GM12878 (cell line): ENCODE measurements at regions of chr10 and their contacts with region 1.

Region 1: GRCh38 chr10:102713814-102714620 is at the start of gene ARL3:
- DNase-seq: peak; percentile 94
- ATAC-seq: peak; percentile 84
- H3K4me3 ChIP-seq: peak within 1 kb of the TSS; percentile 92
- H3K27ac ChIP-seq: peak within 1 kb of the TSS; percentile 88
- H3K4me1 ChIP-seq: peaks cover 17% of the 10 kb centered on the region
- H3K27me3 ChIP-seq: no peaks in the 10 kb centered on the region
- CTCF ChIP-seq: peak in 1 of 3 experiments; percentile 65; a peak in 2 of 6 replicates
- EP300 ChIP-seq: no peak
- POLR2A ChIP-seq: peak; percentile 74
- RAD21 ChIP-seq: peak; percentile 20; the same call in 1 of the 2 replicates
- polyA plus RNA-seq, gene ARL3: 21.0 to 26.1 TPM

Region 2: GRCh38 chr10:102503281-102504220 is 210.5 kb before region 1 on chr10 and contains the start of gene SUFU:
- CTCF ChIA-PET with region 1: interaction called, 4 read pairs
- POLR2A ChIA-PET with region 1: no interaction called
- RAD21 ChIA-PET with region 1: interaction called, 5 read pairs
- SMC1A ChIA-PET with region 1: interaction called, 8 read pairs
- in situ Hi-C with region 1: no loop called
- intact Hi-C with region 1: loop called (anchors 10 kb)
- DNase-seq: peak; percentile 93
- ATAC-seq: peak; percentile 82
- H3K4me3 ChIP-seq: peak within 1 kb of the TSS; percentile 88
- H3K27ac ChIP-seq: peak within 1 kb of the TSS; percentile 72; the same call in 1 of the 2 replicates
- H3K4me1 ChIP-seq: peaks cover 7% of the 10 kb centered on the region
- H3K27me3 ChIP-seq: no peaks in the 10 kb centered on the region
- CTCF ChIP-seq: peak; percentile 82 to 98 (median 89); a peak in 5 of 6 replicates
- EP300 ChIP-seq: no peak
- POLR2A ChIP-seq: peak; percentile 92
- RAD21 ChIP-seq: peak; percentile 88
- polyA plus RNA-seq, gene SUFU: 0.68 to 0.84 TPM

Region 3: GRCh38 chr10:102641880-102642735 is 71.9 kb before region 1 on chr10:
- CTCF ChIA-PET with region 1: interaction called, 19 read pairs
- POLR2A ChIA-PET with region 1: interaction called, 38 read pairs
- RAD21 ChIA-PET with region 1: interaction called, 59 read pairs
- SMC1A ChIA-PET with region 1: interaction called, 36 read pairs
- in situ Hi-C with region 1: no loop called
- intact Hi-C with region 1: loop called (anchors 2 kb)
- DNase-seq: peak; percentile 90
- ATAC-seq: peak; percentile 69
- H3K4me3 ChIP-seq: peak overlapping the region; percentile 93
- H3K27ac ChIP-seq: peak overlapping the region; percentile 96
- H3K4me1 ChIP-seq: peaks cover 7% of the 10 kb centered on the region
- H3K27me3 ChIP-seq: no peaks in the 10 kb centered on the region
- CTCF ChIP-seq: no peak
- EP300 ChIP-seq: no peak
- POLR2A ChIP-seq: peak; percentile 91
- RAD21 ChIP-seq: no peak

Region 4: DNA sequence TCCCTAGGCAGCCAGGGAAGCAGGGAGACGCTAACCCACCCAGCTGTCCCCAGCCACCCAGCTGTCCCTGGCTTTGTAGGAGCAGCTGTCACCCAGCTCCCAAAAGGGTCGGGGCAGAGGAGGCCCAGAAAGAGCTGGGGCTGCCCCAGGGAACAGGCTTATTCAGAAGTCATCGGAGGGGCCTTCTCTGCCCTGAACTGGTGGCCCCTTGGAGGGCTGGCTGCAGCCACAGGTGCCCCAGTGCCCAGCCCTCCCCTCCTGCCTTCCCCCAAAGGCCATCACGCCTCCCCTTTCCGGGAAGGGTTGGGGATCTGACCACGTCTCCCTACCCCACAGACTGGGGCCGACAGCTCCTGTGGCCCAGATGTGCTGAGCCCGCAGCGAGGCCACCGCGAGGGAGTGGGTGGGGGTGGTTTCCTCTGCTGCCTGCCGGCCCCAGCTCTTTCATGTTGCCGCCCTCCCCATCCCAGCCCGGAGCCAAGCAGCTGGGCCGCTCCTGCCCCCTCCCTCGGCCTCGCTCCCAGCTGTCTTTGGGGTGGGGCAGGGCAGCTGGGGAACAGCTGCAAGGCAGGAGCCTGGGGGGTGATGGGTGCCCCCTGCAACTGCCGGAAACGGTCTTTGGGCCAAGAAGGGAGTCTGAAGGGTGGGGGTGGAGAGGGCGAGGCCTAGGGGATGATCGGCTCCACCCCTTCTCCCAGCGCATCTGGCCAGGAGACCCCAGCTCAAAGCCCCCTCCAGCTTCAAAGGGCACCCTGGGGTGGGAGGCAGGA is 52.9 kb before region 1 on chr10:
- CTCF ChIA-PET with region 1: interaction called, 3 read pairs
- POLR2A ChIA-PET with region 1: interaction called, 11 read pairs
- RAD21 ChIA-PET with region 1: interaction called, 42 read pairs
- SMC1A ChIA-PET with region 1: interaction called, 5 read pairs
- in situ Hi-C with region 1: no loop called
- intact Hi-C with region 1: no loop called
- DNase-seq: no peak
- ATAC-seq: peak; percentile 94
- H3K4me3 ChIP-seq: peak overlapping the region; percentile 27; the same call in 1 of the 2 replicates
- H3K27ac ChIP-seq: peak overlapping the region; percentile 83
- H3K4me1 ChIP-seq: peaks cover 22% of the 10 kb centered on the region
- H3K27me3 ChIP-seq: no peaks in the 10 kb centered on the region
- CTCF ChIP-seq: no peak
- EP300 ChIP-seq: peak in 1 of 2 experiments; percentile 73; a peak in 2 of 4 replicates
- POLR2A ChIP-seq: peak; percentile 82
- RAD21 ChIP-seq: peak; percentile 14; the same call in 1 of the 2 replicates

Region 5: DNA sequence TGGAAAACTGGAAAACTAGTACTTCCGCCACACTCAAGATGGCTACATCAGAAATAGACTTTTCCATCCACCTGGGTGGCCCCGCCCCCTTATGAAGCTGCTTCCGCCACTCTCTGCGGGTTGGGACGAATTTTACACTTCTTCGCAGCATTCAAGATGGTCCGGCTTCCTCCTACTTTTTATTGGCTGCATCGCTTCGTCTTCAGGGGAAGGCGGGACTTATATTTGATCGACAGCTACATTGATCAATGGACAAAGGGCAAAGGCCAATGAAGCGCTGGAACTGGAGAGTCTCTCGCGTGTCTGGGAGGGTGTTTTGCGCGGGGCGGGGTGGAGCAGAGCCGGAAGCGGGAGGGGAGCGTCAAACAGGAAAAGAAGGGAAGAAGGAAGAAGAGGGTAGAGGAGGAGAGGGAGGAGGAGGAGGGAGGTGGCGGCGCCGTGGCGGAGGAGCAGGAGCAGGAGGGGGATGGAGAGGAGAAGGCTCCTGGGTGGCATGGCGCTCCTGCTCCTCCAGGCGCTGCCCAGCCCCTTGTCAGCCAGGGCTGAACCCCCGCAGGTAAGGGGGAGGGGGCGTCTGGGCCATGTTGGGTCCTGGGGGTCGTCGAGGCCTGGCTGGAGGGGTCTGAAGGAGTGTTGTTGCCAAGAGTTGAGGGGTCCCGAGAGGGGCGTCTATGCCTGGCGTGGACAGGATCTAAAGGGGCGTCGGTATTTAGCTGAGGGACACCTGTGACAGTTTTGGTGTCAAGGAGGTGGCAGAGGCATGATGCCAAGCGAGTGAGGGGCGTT is 29.8 kb after region 1 on chr10 and contains the start of gene WBP1L:
- CTCF ChIA-PET with region 1: interaction called, 4 read pairs
- POLR2A ChIA-PET with region 1: interaction called, 41 read pairs
- RAD21 ChIA-PET with region 1: interaction called, 16 read pairs
- SMC1A ChIA-PET with region 1: interaction called, 6 read pairs
- in situ Hi-C with region 1: no loop called
- intact Hi-C with region 1: no loop called
- DNase-seq: peak; percentile 100
- ATAC-seq: peak; percentile 98
- H3K4me3 ChIP-seq: peak within 1 kb of the TSS; percentile 68
- H3K27ac ChIP-seq: peak within 1 kb of the TSS; percentile 70
- H3K4me1 ChIP-seq: 0 out of 2 replicates have a peak, but pooled peaks cover 6% of the 10 kb centered on the region
- H3K27me3 ChIP-seq: no peaks in the 10 kb centered on the region
- CTCF ChIP-seq: no peak
- EP300 ChIP-seq: no peak
- POLR2A ChIP-seq: peak; percentile 83
- RAD21 ChIP-seq: no peak
- polyA plus RNA-seq, gene WBP1L: 3.7 to 10.7 TPM

Region 6: DNA sequence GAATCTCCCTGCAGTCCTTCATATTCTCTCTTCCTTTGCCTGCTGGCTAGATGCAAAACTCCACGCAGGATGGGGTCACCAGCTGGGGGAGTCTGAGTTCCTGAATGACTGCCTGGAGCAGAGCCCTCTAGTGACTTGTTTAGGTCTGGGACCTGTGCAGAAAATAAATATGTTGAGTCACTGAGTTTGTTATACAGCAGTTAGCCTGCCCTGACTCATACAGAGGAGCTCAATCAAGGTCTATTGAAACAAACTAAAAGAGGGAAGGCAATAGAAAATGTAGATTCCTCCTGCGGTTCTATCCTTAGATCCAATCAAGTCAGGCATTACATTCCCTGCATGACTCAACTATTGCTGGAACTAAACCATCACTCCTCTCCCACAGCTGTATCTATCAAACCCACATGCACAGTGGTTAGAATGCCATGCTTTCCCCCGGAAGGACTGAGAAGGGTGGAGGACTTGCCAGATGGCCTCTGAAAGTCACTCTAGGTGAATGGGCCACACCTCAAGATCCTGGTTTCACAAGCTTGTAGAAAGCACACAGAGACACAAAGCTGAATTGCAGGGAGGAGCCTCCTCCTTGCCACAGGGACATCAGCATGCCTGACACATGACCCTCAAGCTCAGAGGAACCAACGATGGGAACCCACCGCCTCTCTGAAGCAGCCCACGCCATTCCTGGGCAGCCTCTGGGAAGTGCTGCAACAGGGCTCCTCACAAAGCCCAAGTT is 1067.5 kb after region 1 on chr10:
- CTCF ChIA-PET with region 1: no interaction called
- POLR2A ChIA-PET with region 1: no interaction called
- RAD21 ChIA-PET with region 1: no interaction called
- SMC1A ChIA-PET with region 1: no interaction called
- in situ Hi-C with region 1: no loop called
- intact Hi-C with region 1: no loop called
- DNase-seq: no peak
- ATAC-seq: peak; percentile 59
- H3K4me3 ChIP-seq: no peak overlapping the region
- H3K27ac ChIP-seq: no peak overlapping the region
- H3K4me1 ChIP-seq: peaks cover 7% of the 10 kb centered on the region
- H3K27me3 ChIP-seq: peaks cover 2% of the 10 kb centered on the region in 2 experiments; a peak in 3 of 4 replicates
- CTCF ChIP-seq: peak in 2 of 3 experiments; percentile 21 to 39; a peak in 3 of 6 replicates
- EP300 ChIP-seq: no peak
- POLR2A ChIP-seq: no peak
- RAD21 ChIP-seq: 0 out of 2 replicates have a peak, but pooled peaks have one; percentile 20